Posterior vena cava (tissue), 2 donors: ENCODE measurements at regions of chr5 and their contacts with region 1.

Region 1: DNA sequence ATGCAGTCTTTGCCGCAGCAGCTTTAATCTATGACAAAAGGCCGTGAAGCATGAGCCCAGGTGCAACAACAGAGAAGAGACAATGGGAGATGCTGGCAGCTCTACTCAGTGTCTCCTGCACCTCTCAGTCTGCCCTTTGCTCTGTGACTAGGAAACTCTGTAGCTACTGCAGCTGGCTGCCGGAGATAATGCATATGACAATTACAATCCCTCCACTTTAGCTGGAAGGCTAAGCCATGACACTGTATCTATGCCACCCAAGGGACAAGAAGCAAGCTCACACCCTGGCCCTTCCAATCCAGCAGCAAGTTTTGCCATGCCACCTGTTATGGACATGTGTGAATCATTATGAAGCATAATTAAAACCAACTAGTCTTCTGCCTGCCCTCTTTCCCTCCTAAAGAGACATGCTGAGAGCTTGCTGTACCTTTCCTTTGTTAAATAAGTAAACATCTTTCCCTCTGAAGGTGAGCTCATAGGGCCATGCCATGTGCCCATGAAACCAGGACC is 219.6 kb downstream of the SPOCK1 start:
- DNase-seq: no peak

Region 2: GRCh38 chr5:137069358-137069757 is 210.2 kb before region 1 on chr5:
- intact Hi-C with region 1: loop called in 1 of 2 experiments (anchors 5 kb)
- DNase-seq: no peak